T-cell (primary cell): ENCODE measurements at regions of chr2 and their contacts with region 1.

Region 1: GRCh38 chr2:174473796-174474195 is 13.0 kb downstream of the GPR155 start:
- DNase-seq: no peak
- ATAC-seq: no peak
- H3K4me3 ChIP-seq: no peak overlapping the region
- H3K4me3 Mint-ChIP-seq: no peak overlapping the region
- H3K27ac ChIP-seq: no peak overlapping the region
- H3K27ac Mint-ChIP-seq: peak overlapping the region; percentile 46 to 52
- H3K4me1 ChIP-seq: no peaks in the 10 kb centered on the region
- H3K4me1 Mint-ChIP-seq: peaks cover 20 to 26% (median 23%) of the 10 kb centered on the region in 3 donors
- H3K27me3 ChIP-seq: no peaks in the 10 kb centered on the region
- H3K27me3 Mint-ChIP-seq: no peaks in the 10 kb centered on the region

Region 2: DNA sequence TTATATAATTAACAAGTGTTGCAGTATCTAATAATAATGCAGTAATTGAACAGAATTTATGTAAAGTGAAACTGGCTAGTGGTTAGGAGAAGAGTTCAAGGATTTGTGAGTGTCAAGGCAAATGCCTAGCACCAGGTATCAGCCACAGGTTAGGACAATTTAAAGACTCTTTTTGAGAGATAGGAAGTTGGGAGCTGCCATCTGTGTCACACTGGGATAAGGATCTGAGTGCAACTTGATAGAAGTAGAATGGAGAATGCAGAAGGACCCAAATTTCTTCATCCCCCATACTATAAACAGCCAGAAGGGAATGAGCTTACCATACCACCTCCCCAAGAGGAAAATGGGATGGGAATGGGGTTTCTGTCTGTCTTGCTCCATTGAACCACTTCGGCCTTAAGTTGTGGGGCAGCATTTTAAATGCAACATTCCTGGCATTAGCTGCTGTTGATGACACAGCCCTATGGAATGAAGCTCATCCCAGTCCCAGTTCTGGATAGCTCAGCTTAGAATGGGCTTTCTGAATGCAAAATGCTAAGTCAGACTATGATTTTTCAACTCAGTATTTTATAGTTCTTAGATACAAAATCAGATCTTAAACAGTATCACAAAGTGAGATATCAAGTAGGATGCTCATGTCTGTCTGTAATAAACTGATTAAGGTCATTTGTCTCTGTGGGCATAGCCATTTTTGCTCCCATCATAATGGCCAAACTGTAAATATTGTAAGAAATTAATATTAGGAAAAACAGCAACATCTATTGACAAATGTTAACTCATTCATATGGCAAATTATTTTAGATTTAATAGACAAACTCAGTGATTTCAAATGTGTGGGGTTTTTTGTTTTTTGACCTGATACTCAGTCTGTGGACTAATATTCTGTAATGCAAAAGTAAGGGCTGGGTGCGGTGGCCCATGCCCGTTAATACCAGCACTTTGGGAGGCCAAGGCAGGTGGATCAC is 31.0 kb before region 1 on chr2:
- CTCF ChIA-PET with region 1: no interaction called
- POLR2A ChIA-PET with region 1: no interaction called
- DNase-seq: no peak
- ATAC-seq: no peak
- H3K4me3 ChIP-seq: no peak overlapping the region
- H3K4me3 Mint-ChIP-seq: no peak overlapping the region
- H3K27ac ChIP-seq: no peak overlapping the region
- H3K27ac Mint-ChIP-seq: no peak overlapping the region
- H3K4me1 ChIP-seq: no peaks in the 10 kb centered on the region
- H3K4me1 Mint-ChIP-seq: no peaks in the 10 kb centered on the region
- H3K27me3 ChIP-seq: no peaks in the 10 kb centered on the region
- H3K27me3 Mint-ChIP-seq: no peaks in the 10 kb centered on the region

Region 3: DNA sequence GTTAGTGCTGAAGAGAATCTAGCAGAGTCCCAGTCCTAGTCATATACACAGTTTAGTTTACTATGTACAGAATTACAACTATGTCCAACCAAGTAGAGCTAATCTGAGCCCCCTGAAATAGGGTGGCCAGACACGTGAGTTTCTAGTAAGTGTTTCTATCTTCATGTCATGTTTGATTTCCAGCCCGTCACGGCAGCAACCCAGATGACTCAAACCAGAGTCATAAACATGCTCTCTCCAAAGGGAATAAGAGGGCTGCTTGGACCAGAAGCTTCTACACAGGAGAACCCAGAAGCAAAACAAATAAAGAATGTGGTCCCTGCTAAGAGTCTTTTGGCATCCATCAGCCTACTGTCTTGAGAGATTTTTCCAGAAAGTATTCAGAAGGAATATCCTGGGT is 188.7 kb after region 1 on chr2:
- CTCF ChIA-PET with region 1: interaction called in 1 of 2 experiments, 10 read pairs
- POLR2A ChIA-PET with region 1: no interaction called
- DNase-seq: no peak
- ATAC-seq: no peak
- H3K4me3 ChIP-seq: no peak overlapping the region
- H3K4me3 Mint-ChIP-seq: no peak overlapping the region
- H3K27ac ChIP-seq: no peak overlapping the region
- H3K27ac Mint-ChIP-seq: no peak overlapping the region
- H3K4me1 ChIP-seq: peaks cover 0 to 4% of the 10 kb centered on the region in 2 experiments
- H3K4me1 Mint-ChIP-seq: peaks cover 28 to 49% (median 35%) of the 10 kb centered on the region in 3 donors
- H3K27me3 ChIP-seq: no peaks in the 10 kb centered on the region
- H3K27me3 Mint-ChIP-seq: no peaks in the 10 kb centered on the region